ENCODE measurements at regions of chr11 and their contacts with region 1.

Region 1: GRCh38 chr11:79100093-79100910 is 340.5 kb downstream of the TENM4 start:
- H3K4me3 ChIP-seq: no peak overlapping the region
- H3K27ac ChIP-seq: no peak overlapping the region
- H3K4me1 ChIP-seq: no peaks in the 10 kb centered on the region
- CTCF ChIP-seq: no peak; the same call in 1 of the 2 replicates

Region 2: DNA sequence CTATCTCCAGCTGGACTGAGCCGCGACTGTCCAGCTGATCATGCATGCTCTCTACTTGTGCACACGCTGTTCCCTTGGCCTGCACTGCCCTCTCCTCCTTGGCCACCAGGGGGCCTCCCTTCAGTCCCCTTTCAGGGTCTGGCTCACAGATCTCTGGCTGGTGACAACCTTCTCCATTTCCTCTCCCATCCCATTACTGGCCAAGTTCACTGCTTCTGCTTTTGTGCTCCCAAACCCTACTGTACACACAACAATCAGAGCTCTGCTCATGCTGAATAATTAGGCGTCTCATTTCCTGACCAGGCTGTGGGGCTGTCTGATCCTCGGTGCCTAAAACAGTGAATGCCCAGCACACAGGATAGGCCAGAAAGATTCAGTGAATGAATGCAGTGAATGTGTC is 301.6 kb before region 1 on chr11:
- CTCF ChIA-PET with region 1: interaction called, 17 read pairs
- POLR2A ChIA-PET with region 1: no interaction called
- H3K4me3 ChIP-seq: no peak overlapping the region
- H3K27ac ChIP-seq: no peak overlapping the region
- H3K4me1 ChIP-seq: peaks cover 13% of the 10 kb centered on the region
- CTCF ChIP-seq: peak; percentile 74

Region 3: GRCh38 chr11:79076526-79077115 is 23.7 kb before region 1 on chr11:
- CTCF ChIA-PET with region 1: interaction called, 11 read pairs
- POLR2A ChIA-PET with region 1: no interaction called
- H3K4me3 ChIP-seq: no peak overlapping the region
- H3K27ac ChIP-seq: no peak overlapping the region
- H3K4me1 ChIP-seq: no peaks in the 10 kb centered on the region
- CTCF ChIP-seq: no peak

Region 4: DNA sequence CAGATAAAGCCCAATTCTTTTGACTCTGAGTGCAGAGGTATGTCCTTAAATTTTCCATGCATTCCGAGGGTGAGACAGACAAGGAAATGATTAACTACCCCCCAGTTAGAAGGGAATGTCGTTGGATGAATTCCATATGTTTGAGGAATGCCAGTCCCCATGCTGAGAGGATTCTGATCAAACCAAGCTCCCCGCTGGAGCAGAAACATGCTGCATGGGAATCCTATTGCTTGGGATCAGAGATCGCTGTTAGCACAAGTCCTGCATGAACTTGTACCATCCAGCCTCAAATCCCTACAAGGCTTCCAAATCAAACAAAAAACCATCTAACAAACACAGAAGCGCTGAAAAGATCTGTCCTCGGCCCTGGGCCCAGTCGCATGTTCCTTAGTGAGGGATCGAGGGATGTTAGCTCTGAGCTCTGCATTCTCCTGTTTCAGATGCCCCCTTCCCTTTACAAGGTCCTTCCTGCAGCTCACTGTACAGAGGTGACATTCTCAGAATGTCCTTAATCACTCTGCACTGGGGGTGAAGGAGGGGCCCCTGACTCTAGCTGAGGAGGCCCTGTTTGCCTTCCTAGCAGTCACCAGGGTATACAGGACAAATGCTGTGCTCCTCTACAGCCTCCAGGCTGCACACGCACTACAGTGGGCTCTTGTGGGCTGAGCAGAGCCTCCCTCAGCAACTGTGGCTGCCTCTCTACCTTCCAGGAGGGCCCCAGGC is 12.9 kb before region 1 on chr11:
- CTCF ChIA-PET with region 1: interaction called, 11 read pairs
- POLR2A ChIA-PET with region 1: no interaction called
- H3K4me3 ChIP-seq: no peak overlapping the region
- H3K27ac ChIP-seq: no peak overlapping the region
- H3K4me1 ChIP-seq: no peaks in the 10 kb centered on the region
- CTCF ChIP-seq: no peak

Measured in HEK293 (cell line).